Caco-2 (cell line): ENCODE measurements at regions of chr18 and their contacts with region 1.

Region 1: GRCh38 chr18:26017929-26018328 is 72.5 kb downstream of the SS18 start:
- DNase-seq: no peak
- H3K4me3 ChIP-seq: no peak overlapping the region
- H3K4me3 Mint-ChIP-seq: no peak overlapping the region
- H3K27ac Mint-ChIP-seq: no peak overlapping the region
- H3K4me1 ChIP-seq: no peaks in the 10 kb centered on the region
- H3K4me1 Mint-ChIP-seq: no peaks in the 10 kb centered on the region
- H3K27me3 ChIP-seq: no peaks in the 10 kb centered on the region
- H3K27me3 Mint-ChIP-seq: no peaks in the 10 kb centered on the region
- CTCF ChIP-seq: no peak

Region 2: GRCh38 chr18:25621144-25621543 is 396.8 kb before region 1 on chr18:
- CTCF ChIA-PET with region 1: no interaction called
- POLR2A ChIA-PET with region 1: no interaction called
- intact Hi-C with region 1: no loop called
- DNase-seq: no peak
- H3K4me3 ChIP-seq: no peak overlapping the region
- H3K4me3 Mint-ChIP-seq: no peak overlapping the region
- H3K27ac Mint-ChIP-seq: no peak overlapping the region
- H3K4me1 ChIP-seq: no peaks in the 10 kb centered on the region
- H3K4me1 Mint-ChIP-seq: no peaks in the 10 kb centered on the region
- H3K27me3 ChIP-seq: no peaks in the 10 kb centered on the region
- H3K27me3 Mint-ChIP-seq: no peaks in the 10 kb centered on the region
- CTCF ChIP-seq: no peak

Region 3: GRCh38 chr18:25830787-25831186 is 187.1 kb before region 1 on chr18:
- CTCF ChIA-PET with region 1: no interaction called
- POLR2A ChIA-PET with region 1: no interaction called
- intact Hi-C with region 1: no loop called
- DNase-seq: no peak
- H3K4me3 ChIP-seq: no peak overlapping the region
- H3K4me3 Mint-ChIP-seq: no peak overlapping the region
- H3K27ac Mint-ChIP-seq: no peak overlapping the region
- H3K4me1 ChIP-seq: no peaks in the 10 kb centered on the region
- H3K4me1 Mint-ChIP-seq: peaks cover 5% of the 10 kb centered on the region
- H3K27me3 ChIP-seq: no peaks in the 10 kb centered on the region
- H3K27me3 Mint-ChIP-seq: no peaks in the 10 kb centered on the region
- CTCF ChIP-seq: no peak

Region 4: DNA sequence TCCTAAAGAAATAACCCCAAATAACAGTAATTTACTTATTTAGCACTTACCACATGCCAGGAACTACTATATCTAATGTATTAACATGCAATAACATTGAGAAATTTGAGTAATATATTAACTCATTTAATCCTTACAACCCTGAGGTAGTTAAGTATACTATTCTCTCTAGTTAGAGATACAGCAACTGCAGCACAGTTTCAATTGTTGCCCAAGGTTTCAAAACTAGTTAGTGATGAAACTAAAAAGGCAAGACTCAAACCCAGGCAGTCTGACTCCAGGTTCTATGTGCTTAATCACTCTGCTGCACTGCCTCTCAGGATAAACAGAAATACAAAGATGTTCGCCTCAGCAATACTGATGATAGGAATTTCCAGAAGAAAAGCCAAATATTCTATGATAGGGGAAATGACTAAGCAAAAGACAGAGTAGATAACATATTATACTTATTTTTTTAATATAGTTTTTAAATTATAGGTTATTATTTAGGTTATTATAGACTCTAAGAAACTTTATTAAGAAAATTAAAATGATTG is 15.5 kb before region 1 on chr18:
- CTCF ChIA-PET with region 1: no interaction called
- POLR2A ChIA-PET with region 1: no interaction called
- intact Hi-C with region 1: loop called (anchors 1 kb)
- DNase-seq: no peak
- H3K4me3 ChIP-seq: no peak overlapping the region
- H3K4me3 Mint-ChIP-seq: no peak overlapping the region
- H3K27ac Mint-ChIP-seq: no peak overlapping the region
- H3K4me1 ChIP-seq: no peaks in the 10 kb centered on the region
- H3K4me1 Mint-ChIP-seq: no peaks in the 10 kb centered on the region
- H3K27me3 ChIP-seq: no peaks in the 10 kb centered on the region
- H3K27me3 Mint-ChIP-seq: peaks cover 4% of the 10 kb centered on the region
- CTCF ChIP-seq: no peak